Left lung (tissue), 14 donors: ENCODE measurements at regions of chr10 and their contacts with region 1.

Region 1: DNA sequence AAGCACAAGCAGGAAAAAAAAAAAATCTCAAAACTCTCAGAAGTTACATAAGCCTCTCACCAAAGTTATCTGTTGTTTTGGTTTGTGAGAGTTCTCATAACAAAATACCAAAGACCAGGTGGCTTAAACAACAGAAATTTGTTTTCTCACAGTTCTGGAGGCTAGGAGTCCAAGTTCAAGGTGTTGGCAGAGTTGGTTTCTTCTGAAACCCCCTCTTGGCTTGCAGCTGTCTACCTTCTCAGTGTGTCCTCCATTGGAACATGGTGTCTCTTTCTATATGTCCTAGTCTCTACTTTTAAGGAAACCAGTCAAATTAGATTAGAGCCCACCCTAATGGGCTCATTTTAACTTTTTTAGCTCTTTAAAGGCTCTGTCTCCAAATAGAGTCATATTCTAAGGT is 44.9 kb downstream of the TNKS2 start:
- DNase-seq: no peak
- ATAC-seq: no peak
- H3K4me3 ChIP-seq: no peak overlapping the region
- H3K27ac ChIP-seq: no peak overlapping the region
- H3K4me1 ChIP-seq: no peaks in the 10 kb centered on the region
- H3K27me3 ChIP-seq: no peaks in the 10 kb centered on the region
- CTCF ChIP-seq: no peak

Region 2: DNA sequence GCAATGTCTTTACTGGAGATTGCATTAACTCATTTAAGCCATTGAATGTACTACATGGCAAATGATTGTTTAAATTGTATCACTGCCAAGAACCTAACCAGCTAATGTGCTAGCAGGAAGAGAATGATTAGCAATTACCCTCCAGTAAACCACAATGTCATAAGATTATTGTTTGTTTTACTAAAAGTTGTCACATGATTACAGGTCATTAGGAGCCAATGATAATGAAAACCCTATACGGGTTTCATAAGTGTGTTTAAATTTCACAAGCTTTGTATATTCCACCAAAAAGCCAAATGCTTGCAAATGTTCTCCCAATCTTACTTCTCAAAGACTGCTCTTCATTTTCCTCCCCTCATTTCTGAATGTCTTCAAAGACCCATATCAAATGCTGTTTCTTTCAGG is 133.7 kb before region 1 on chr10:
- intact Hi-C with region 1: no loop called
- DNase-seq: peak in 1 of 4 donors; percentile 41
- ATAC-seq: peak; percentile 77
- H3K4me3 ChIP-seq: no peak overlapping the region
- H3K27ac ChIP-seq: no peak overlapping the region
- H3K4me1 ChIP-seq: peaks cover 0 to 4% of the 10 kb centered on the region in 2 donors
- H3K27me3 ChIP-seq: no peaks in the 10 kb centered on the region
- CTCF ChIP-seq: no peak

Region 3: DNA sequence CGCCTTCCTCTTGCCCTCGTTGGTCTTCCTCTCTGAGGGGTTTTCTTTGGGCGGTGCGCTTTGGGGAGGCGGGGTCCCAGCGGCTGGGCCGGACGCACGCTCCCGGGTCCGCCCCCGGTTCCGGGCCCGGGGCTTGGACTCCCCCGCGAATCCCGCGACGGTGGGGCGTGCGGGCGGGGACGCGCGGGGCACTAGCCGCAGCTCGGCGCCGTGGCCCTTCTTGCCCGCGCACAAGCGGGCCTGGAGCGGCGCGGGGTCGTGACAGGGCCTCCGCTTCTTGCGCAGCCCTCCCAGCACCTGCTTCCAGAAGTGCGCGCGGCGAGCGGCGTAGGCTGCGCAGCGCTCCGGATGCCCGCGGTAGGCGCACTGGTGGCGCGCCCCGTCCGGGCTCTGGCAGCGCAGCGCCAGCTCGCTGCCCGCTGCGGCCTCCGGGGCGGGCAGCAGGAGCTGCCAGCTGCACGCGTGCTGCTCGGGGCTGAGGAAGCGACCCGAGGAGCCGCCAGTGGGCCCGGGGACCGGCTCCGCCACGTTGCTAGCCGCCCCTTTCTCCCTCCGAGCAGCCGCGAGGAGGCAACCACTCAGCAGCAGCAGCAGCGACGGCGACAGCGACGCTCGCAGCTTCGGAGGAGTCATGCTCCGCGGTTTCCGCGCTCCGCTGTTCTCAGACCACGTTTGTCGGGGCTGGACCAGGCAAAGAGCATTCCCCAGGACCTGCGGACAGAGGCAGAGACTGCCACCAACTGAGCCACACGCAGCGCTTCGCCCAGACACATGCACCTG is 65.4 kb after region 1 on chr10:
- intact Hi-C with region 1: loop called in 1 of 2 experiments (anchors 10 kb)
- DNase-seq: peak; percentile 81 to 92 (median 86)
- ATAC-seq: peak; percentile 96
- H3K4me3 ChIP-seq: peak overlapping the region; percentile 79 to 83
- H3K27ac ChIP-seq: peak overlapping the region; percentile 71 to 82
- H3K4me1 ChIP-seq: peaks cover 5 to 23% of the 10 kb centered on the region in 2 donors
- H3K27me3 ChIP-seq: peaks cover 0 to under 1% of the 10 kb centered on the region in 2 donors
- CTCF ChIP-seq: peak; percentile 18 to 23